HepG2 (cell line): ENCODE measurements at regions of chr19 and their contacts with region 1.

Region 1: DNA sequence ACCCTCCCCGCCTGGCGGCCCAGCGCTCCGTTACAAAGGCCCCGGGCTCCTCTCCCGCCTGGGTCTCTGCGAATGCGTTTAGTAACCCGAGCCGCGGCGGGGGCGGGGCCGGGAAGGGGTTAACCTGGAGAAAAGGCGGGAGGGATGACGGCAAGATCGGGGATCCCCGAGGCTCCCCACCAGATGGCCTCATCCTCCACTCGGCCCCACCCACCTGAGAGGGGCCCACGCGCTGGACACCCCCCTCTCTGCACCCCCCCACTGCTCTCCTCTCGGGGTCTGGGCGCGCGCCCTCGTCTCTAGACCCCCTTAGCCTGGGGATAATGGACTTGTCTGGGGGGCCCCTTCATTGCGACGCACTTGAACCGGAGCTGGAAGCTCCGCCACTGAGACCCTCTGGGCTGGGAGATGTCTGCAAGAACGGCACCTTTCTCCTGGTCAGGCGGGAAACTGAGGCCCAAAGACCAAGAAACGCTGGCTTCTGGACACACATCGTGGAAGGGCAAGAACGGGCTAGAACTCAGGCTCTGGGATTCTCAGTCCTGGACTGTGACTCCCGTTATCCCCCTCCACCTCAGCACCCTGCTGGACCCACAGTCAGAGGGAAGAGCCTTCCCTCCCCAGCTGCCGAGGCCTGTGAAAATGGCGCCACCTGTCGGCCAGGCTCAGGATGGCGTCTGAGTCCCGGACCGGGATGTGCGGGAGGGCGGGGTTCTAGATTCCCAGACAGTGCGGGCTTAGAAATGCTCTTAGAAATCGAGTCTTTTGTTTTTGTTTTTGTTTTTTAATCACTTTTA is 2.9 kb upstream of the LTBP4 start:
- DNase-seq: peak; percentile 63
- ATAC-seq: peak; percentile 58
- H3K4me3 ChIP-seq: no peak overlapping the region; a peak in 1 of 6 replicates
- H3K27ac ChIP-seq: no peak overlapping the region
- H3K4me1 ChIP-seq: peaks cover 42% of the 10 kb centered on the region
- H3K27me3 ChIP-seq: peaks cover 6 to 48% of the 10 kb centered on the region in 2 experiments; a peak in 3 of 5 replicates
- CTCF ChIP-seq: peak; percentile 94
- EP300 ChIP-seq: no peak
- POLR2A ChIP-seq: no peak
- RAD21 ChIP-seq: peak; percentile 89

Region 2: GRCh38 chr19:40411125-40411842 is 187.0 kb before region 1 on chr19:
- CTCF ChIA-PET with region 1: no interaction called
- POLR2A ChIA-PET with region 1: no interaction called
- in situ Hi-C with region 1: no loop called
- intact Hi-C with region 1: no loop called
- DNase-seq: no peak
- ATAC-seq: peak; percentile 42
- H3K4me3 ChIP-seq: no peak overlapping the region; a peak in 1 of 6 replicates
- H3K27ac ChIP-seq: no peak overlapping the region
- H3K4me1 ChIP-seq: peaks cover 45% of the 10 kb centered on the region
- H3K27me3 ChIP-seq: peaks cover 2 to 27% of the 10 kb centered on the region in 2 experiments; a peak in 3 of 5 replicates
- CTCF ChIP-seq: no peak
- EP300 ChIP-seq: no peak
- POLR2A ChIP-seq: no peak
- RAD21 ChIP-seq: no peak

Region 3: DNA sequence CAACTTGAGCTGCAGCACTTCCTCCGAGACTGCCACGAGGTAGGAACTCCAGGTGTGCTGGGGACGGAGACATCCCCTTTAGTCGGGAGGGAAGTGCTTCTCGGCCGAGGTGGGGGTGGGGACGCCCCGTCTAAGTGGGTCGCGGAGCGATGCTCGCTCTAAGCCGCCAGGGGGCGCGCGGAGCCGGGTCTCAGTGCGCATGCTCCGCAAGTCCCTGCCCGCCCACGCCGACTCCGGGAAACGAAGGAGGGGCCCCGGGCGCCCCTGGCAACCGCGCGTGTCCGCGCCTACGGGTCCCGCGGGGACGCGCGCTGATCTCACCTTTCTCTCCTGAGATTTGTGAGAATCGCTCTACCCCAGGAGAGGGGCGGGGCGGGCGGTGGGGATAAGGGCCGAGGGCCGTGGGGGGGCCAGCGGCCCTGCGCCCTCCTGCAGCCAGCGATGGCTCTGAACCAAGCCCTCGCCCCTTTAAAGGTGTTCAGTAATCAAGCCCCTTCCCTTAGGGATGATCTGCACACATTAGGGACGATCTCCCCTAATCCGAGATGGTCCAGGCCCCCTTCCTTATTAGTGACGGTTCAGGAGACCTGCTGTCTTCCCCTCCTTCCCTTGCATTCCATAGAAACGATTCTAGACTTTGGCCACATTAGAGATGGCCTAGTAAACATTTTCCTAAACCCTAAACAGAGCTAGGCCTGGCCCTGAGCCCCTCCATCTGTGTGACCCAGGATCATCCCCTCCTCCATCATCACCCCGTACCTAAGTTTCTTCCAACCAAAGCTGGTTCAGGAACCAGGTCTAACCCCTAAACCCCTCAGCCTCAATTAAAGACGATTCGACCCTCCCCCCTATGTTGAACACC is 69.0 kb before region 1 on chr19:
- CTCF ChIA-PET with region 1: no interaction called
- POLR2A ChIA-PET with region 1: no interaction called
- in situ Hi-C with region 1: loop called (anchors 5 kb)
- intact Hi-C with region 1: loop called (anchors 5 kb)
- DNase-seq: peak; percentile 56
- ATAC-seq: peak; percentile 57
- H3K4me3 ChIP-seq: peak overlapping the region; percentile 35 to 65 (median 51)
- H3K27ac ChIP-seq: no peak overlapping the region
- H3K4me1 ChIP-seq: peaks cover 29% of the 10 kb centered on the region
- H3K27me3 ChIP-seq: no peaks in the 10 kb centered on the region; a peak in 1 of 5 replicates
- CTCF ChIP-seq: peak; percentile 95
- EP300 ChIP-seq: no peak
- POLR2A ChIP-seq: no peak
- RAD21 ChIP-seq: peak; percentile 56; the same call in 1 of the 2 replicates

Region 4: GRCh38 chr19:40542202-40542859 is 56.0 kb before region 1 on chr19:
- CTCF ChIA-PET with region 1: interaction called, 18 read pairs
- POLR2A ChIA-PET with region 1: no interaction called
- in situ Hi-C with region 1: no loop called
- intact Hi-C with region 1: loop called (anchors 2 kb)
- DNase-seq: no peak
- ATAC-seq: no peak
- H3K4me3 ChIP-seq: no peak overlapping the region
- H3K27ac ChIP-seq: no peak overlapping the region
- H3K4me1 ChIP-seq: peaks cover 4% of the 10 kb centered on the region; the same call in 1 of the 2 replicates
- H3K27me3 ChIP-seq: peaks cover 1 to 3% of the 10 kb centered on the region in 2 experiments; a peak in 3 of 5 replicates
- CTCF ChIP-seq: no peak
- EP300 ChIP-seq: no peak
- POLR2A ChIP-seq: no peak
- RAD21 ChIP-seq: no peak

Region 5: GRCh38 chr19:40549007-40549708 is 49.2 kb before region 1 on chr19:
- CTCF ChIA-PET with region 1: interaction called, 18 read pairs
- POLR2A ChIA-PET with region 1: interaction called, 7 read pairs
- in situ Hi-C with region 1: no loop called
- intact Hi-C with region 1: loop called (anchors 2 kb)
- DNase-seq: peak; percentile 49
- ATAC-seq: peak; percentile 95
- H3K4me3 ChIP-seq: peak overlapping the region in 1 of 3 experiments; percentile 42; a peak in 1 of 6 replicates
- H3K27ac ChIP-seq: no peak overlapping the region
- H3K4me1 ChIP-seq: peaks cover 14% of the 10 kb centered on the region
- H3K27me3 ChIP-seq: peaks cover 2 to 14% of the 10 kb centered on the region in 2 experiments; a peak in 4 of 5 replicates
- CTCF ChIP-seq: peak; percentile 77
- EP300 ChIP-seq: no peak
- POLR2A ChIP-seq: no peak
- RAD21 ChIP-seq: peak; percentile 35; the same call in 1 of the 2 replicates

Region 6: DNA sequence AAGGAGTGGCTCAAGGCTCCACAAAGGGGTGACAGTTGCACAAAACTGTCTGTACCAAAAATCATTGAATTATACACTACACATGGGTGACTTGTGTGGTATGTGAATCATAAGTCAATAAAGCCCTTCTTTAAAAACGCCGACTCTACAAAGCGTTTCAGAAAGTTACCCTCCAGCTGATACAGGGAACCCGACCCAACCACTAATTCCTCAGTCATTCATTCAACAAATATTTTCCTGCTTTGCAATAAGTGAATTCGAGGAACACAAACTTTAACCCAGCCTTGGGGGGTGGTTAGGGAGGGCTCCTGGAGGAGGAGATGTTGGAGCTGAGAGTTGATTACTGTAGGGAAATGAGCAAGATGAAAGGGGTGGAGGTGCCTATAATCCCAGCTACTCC is 34.9 kb after region 1 on chr19:
- CTCF ChIA-PET with region 1: interaction called, 37 read pairs
- POLR2A ChIA-PET with region 1: interaction called, 3 read pairs
- in situ Hi-C with region 1: no loop called
- intact Hi-C with region 1: no loop called
- DNase-seq: peak; percentile 25
- ATAC-seq: no peak
- H3K4me3 ChIP-seq: no peak overlapping the region
- H3K27ac ChIP-seq: no peak overlapping the region
- H3K4me1 ChIP-seq: no peaks in the 10 kb centered on the region
- H3K27me3 ChIP-seq: peaks cover 1 to 14% of the 10 kb centered on the region in 2 experiments; a peak in 3 of 5 replicates
- CTCF ChIP-seq: no peak
- EP300 ChIP-seq: no peak
- POLR2A ChIP-seq: no peak
- RAD21 ChIP-seq: no peak